ENCODE measurements at regions of chr13 and their contacts with region 1.

Region 1: DNA sequence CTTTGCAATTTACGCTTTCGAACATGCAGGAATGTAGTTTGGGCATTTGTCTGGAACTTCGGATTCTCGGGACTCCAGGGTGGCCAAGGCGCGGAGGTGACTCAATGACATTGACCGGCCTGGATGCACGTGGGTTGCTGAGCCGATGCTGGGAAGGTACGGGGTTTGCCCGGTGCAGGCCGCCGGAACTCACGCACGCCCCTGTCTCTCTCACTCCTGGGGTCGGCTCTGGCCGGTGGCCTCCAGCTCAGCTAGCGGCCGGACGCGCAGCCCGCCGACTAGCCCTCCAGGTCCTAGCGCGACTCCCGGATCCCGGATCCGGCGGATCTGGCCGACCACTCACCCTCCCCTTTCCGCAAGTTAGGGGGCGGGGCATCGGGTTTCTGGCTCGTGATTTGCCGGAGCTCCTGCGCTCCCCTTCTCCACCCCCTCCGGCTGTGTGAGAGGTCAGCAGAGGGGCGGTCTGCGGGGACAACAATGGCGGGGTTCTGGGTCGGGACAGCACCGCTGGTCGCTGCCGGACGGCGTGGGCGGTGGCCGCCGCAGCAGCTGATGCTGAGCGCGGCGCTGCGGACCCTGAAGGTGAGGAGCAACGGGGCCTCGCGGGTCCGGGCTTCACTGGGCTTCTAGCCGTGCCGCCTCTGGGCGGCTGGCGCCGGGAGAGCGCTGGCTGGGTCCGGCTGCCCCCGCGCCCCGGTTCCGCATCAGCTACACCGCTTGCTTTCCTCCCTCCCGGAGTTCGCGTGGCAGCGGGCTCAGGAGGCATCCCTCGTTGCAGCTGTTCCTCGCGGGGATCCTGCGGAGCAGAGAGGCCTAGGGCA is at the start of gene PCCA:
- DNase-seq: peak; percentile 95
- H3K4me3 Mint-ChIP-seq: peak within 1 kb of the TSS; percentile 84
- H3K27ac Mint-ChIP-seq: peak within 1 kb of the TSS; percentile 69
- H3K4me1 Mint-ChIP-seq: peaks cover 26% of the 10 kb centered on the region
- H3K27me3 Mint-ChIP-seq: no peaks in the 10 kb centered on the region
- CTCF ChIP-seq: no peak
- total RNA-seq, gene PCCA: 20.6 and 23.4 TPM in 2 replicates

Region 2: GRCh38 chr13:99916366-99917103 is 172.3 kb before region 1 on chr13:
- CTCF ChIA-PET with region 1: no interaction called
- POLR2A ChIA-PET with region 1: no interaction called
- intact Hi-C with region 1: loop called (anchors 5 kb)
- DNase-seq: peak; percentile 86
- H3K4me3 Mint-ChIP-seq: no peak overlapping the region
- H3K27ac Mint-ChIP-seq: no peak overlapping the region
- H3K4me1 Mint-ChIP-seq: peaks cover 6% of the 10 kb centered on the region
- H3K27me3 Mint-ChIP-seq: no peaks in the 10 kb centered on the region
- CTCF ChIP-seq: peak; percentile 91

Region 3: GRCh38 chr13:99992949-99993351 is 95.9 kb before region 1 on chr13:
- CTCF ChIA-PET with region 1: no interaction called
- POLR2A ChIA-PET with region 1: no interaction called
- intact Hi-C with region 1: loop called (anchors 2 kb)
- DNase-seq: peak; percentile 61
- H3K4me3 Mint-ChIP-seq: no peak overlapping the region
- H3K27ac Mint-ChIP-seq: no peak overlapping the region
- H3K4me1 Mint-ChIP-seq: peaks cover 13% of the 10 kb centered on the region
- H3K27me3 Mint-ChIP-seq: peaks cover 38% of the 10 kb centered on the region
- CTCF ChIP-seq: no peak

Region 4: DNA sequence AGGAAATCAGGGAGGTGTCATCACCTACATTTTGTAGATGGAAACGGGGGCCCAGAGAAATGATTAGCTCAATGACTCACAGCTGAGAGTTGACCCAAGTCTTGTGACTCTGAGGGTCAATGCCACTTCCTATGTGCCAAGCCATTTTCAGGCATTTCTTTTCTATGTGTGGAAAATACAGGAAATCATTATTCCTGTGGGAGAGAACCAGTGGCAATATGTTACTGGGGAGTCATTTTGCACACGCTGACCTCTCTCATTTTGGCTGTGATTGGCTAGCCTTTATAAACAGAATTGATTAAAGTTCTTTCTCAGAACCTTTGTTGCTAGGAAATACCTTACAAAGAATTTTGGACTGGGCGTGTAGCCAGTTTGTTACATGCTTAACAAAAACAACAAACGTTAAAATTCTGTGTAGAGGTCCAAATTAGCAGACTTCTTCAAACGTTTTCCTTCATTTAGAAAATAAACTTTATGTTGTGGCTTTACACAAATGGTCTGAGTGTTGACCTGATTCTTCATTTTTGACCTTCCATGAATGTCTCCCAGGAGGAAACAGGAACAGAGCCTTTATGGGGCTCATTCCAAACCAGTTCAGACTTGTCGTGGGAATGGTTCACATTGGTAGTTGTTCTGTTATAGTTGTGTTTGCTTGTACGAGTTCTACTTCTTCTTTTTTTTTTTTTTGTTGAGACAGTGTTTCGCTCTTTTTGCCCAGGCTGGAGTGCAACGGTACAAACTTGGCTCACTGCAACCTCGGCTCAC is 11.4 kb after region 1 on chr13:
- CTCF ChIA-PET with region 1: interaction called, 8 read pairs
- POLR2A ChIA-PET with region 1: interaction called, 59 read pairs
- intact Hi-C with region 1: no loop called
- DNase-seq: peak; percentile 78
- H3K4me3 Mint-ChIP-seq: peak overlapping the region; percentile 57
- H3K27ac Mint-ChIP-seq: peak overlapping the region; percentile 95
- H3K4me1 Mint-ChIP-seq: peaks cover 30% of the 10 kb centered on the region
- H3K27me3 Mint-ChIP-seq: no peaks in the 10 kb centered on the region
- CTCF ChIP-seq: no peak

Region 5: DNA sequence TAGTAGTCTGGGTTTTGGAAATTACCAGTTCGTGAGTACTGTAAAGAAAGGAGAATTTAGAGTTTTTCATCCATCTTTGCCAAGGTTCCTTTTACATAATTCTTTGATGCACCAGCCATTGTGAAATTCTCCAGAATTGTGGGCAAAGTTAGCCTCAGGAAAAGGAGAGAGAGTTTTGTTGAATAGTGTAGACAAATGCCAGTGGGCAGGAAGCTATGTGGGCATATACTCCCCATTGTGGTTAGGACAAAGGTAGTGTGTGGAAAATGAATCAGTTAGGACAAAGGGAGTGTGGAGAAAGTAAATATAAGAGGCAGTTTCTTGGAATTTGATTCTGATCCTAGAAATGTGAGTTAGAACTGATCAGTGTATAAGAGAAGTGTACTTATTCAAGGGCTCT is 67.9 kb after region 1 on chr13:
- CTCF ChIA-PET with region 1: no interaction called
- POLR2A ChIA-PET with region 1: interaction called, 12 read pairs
- intact Hi-C with region 1: no loop called
- DNase-seq: peak; percentile 87
- H3K4me3 Mint-ChIP-seq: peak overlapping the region; percentile 0
- H3K27ac Mint-ChIP-seq: peak overlapping the region; percentile 61
- H3K4me1 Mint-ChIP-seq: peaks cover 14% of the 10 kb centered on the region
- H3K27me3 Mint-ChIP-seq: no peaks in the 10 kb centered on the region
- CTCF ChIP-seq: no peak

Region 6: GRCh38 chr13:100392709-100393641 is 304.1 kb after region 1 on chr13:
- CTCF ChIA-PET with region 1: no interaction called
- POLR2A ChIA-PET with region 1: no interaction called
- intact Hi-C with region 1: loop called (anchors 5 kb)
- DNase-seq: peak; percentile 99
- H3K4me3 Mint-ChIP-seq: peak overlapping the region; percentile 57
- H3K27ac Mint-ChIP-seq: no peak overlapping the region
- H3K4me1 Mint-ChIP-seq: peaks cover 17% of the 10 kb centered on the region
- H3K27me3 Mint-ChIP-seq: no peaks in the 10 kb centered on the region
- CTCF ChIP-seq: no peak

Measured in MCF 10A (cell line).